ENCODE measurements at regions of chr3 and their contacts with region 1.

Region 1: GRCh38 chr3:119831022-119831421 is 49.1 kb downstream of the NR1I2 start:
- DNase-seq: no peak
- H3K4me3 ChIP-seq: no peak overlapping the region
- H3K27ac ChIP-seq: no peak overlapping the region
- H3K4me1 ChIP-seq: no peaks in the 10 kb centered on the region
- H3K27me3 ChIP-seq: no peaks in the 10 kb centered on the region
- CTCF ChIP-seq: no peak; the same call in 1 of the 2 replicates

Region 2: GRCh38 chr3:120182724-120183524 is 351.9 kb after region 1 on chr3:
- CTCF ChIA-PET with region 1: no interaction called
- POLR2A ChIA-PET with region 1: interaction called, 3 read pairs
- intact Hi-C with region 1: loop called (anchors 5 kb)
- DNase-seq: peak; percentile 53 to 57
- H3K4me3 ChIP-seq: no peak overlapping the region
- H3K27ac ChIP-seq: peak overlapping the region; percentile 7; the same call in 1 of the 2 replicates
- H3K4me1 ChIP-seq: peaks cover 38% of the 10 kb centered on the region
- H3K27me3 ChIP-seq: no peaks in the 10 kb centered on the region
- CTCF ChIP-seq: peak; percentile 61

Measured in PC-9 (cell line).